ENCODE measurements at regions of chr7 and their contacts with region 1.

Region 1: GRCh38 chr7:44565097-44565794 is 8.5 kb downstream of the DDX56 start:
- DNase-seq: peak; percentile 50 to 67 (median 58)
- H3K4me3 ChIP-seq: no peak overlapping the region
- H3K4me3 Mint-ChIP-seq: peak overlapping the region in 1 of 8 donors; percentile 11
- H3K27ac ChIP-seq: no peak overlapping the region
- H3K27ac Mint-ChIP-seq: peak overlapping the region in 6 of 7 donors; percentile 50 to 87 (median 72)
- H3K4me1 ChIP-seq: peaks cover 10% of the 10 kb centered on the region
- H3K4me1 Mint-ChIP-seq: peaks cover 1 to 11% (median 7%) of the 10 kb centered on the region in 4 donors
- H3K27me3 ChIP-seq: no peaks in the 10 kb centered on the region
- H3K27me3 Mint-ChIP-seq: no peaks in the 10 kb centered on the region

Region 2: GRCh38 chr7:44240983-44241510 is 324.2 kb before region 1 on chr7:
- CTCF ChIA-PET with region 1: interaction called, 31 read pairs
- POLR2A ChIA-PET with region 1: no interaction called
- intact Hi-C with region 1: no loop called
- DNase-seq: peak; percentile 54 to 63 (median 57)
- H3K4me3 ChIP-seq: no peak overlapping the region
- H3K4me3 Mint-ChIP-seq: peak overlapping the region in 7 of 8 donors; percentile 25 to 64 (median 52)
- H3K27ac ChIP-seq: no peak overlapping the region
- H3K27ac Mint-ChIP-seq: peak overlapping the region in 3 of 7 donors; percentile 19 to 59 (median 41)
- H3K4me1 ChIP-seq: no peaks in the 10 kb centered on the region
- H3K4me1 Mint-ChIP-seq: no peaks in the 10 kb centered on the region
- H3K27me3 ChIP-seq: no peaks in the 10 kb centered on the region
- H3K27me3 Mint-ChIP-seq: no peaks in the 10 kb centered on the region

Region 3: DNA sequence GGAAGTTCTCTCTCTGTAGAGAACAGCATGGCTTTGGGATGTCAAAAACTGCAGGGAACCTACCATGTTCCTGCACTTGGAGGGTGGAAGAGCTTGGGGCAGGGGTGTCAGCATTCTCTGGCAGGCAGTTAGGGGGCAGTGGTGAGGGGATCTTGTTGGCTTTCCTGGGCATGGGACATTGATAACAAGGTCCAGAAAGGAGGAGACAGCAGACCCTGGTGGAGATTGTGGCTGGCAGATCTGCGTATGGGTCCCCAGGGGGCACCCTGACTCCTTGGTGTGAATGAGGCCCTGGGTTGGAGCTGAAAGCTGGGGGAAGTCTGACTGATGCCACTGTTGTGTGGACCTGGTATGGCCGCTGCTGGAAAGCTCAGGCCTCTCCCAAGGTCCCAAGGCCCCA is 216.9 kb before region 1 on chr7:
- CTCF ChIA-PET with region 1: interaction called, 5 read pairs
- POLR2A ChIA-PET with region 1: no interaction called
- intact Hi-C with region 1: loop called (anchors 1 kb)
- DNase-seq: no peak
- H3K4me3 ChIP-seq: no peak overlapping the region
- H3K4me3 Mint-ChIP-seq: no peak overlapping the region
- H3K27ac ChIP-seq: no peak overlapping the region
- H3K27ac Mint-ChIP-seq: no peak overlapping the region
- H3K4me1 ChIP-seq: no peaks in the 10 kb centered on the region
- H3K4me1 Mint-ChIP-seq: no peaks in the 10 kb centered on the region
- H3K27me3 ChIP-seq: no peaks in the 10 kb centered on the region
- H3K27me3 Mint-ChIP-seq: peaks cover 5 to 11% of the 10 kb centered on the region in 2 donors

Region 4: GRCh38 chr7:44547536-44548231 is 17.6 kb before region 1 on chr7:
- CTCF ChIA-PET with region 1: interaction called, 17 read pairs
- POLR2A ChIA-PET with region 1: no interaction called
- intact Hi-C with region 1: no loop called
- DNase-seq: no peak
- H3K4me3 ChIP-seq: no peak overlapping the region
- H3K4me3 Mint-ChIP-seq: peak overlapping the region in 3 of 8 donors; percentile 17 to 46 (median 31)
- H3K27ac ChIP-seq: no peak overlapping the region
- H3K27ac Mint-ChIP-seq: peak overlapping the region in 3 of 7 donors; percentile 0 to 61 (median 4)
- H3K4me1 ChIP-seq: no peaks in the 10 kb centered on the region
- H3K4me1 Mint-ChIP-seq: peaks cover 0 to 4% (median 3%) of the 10 kb centered on the region in 4 donors
- H3K27me3 ChIP-seq: no peaks in the 10 kb centered on the region
- H3K27me3 Mint-ChIP-seq: peaks cover 2 to 5% of the 10 kb centered on the region in 2 donors

Region 5: GRCh38 chr7:44581879-44582603 is 16.8 kb after region 1 on chr7 and contains the start of gene TMED4:
- CTCF ChIA-PET with region 1: interaction called, 36 read pairs
- POLR2A ChIA-PET with region 1: interaction called, 67 read pairs
- intact Hi-C with region 1: no loop called
- DNase-seq: peak; percentile 100
- H3K4me3 ChIP-seq: peak within 1 kb of the TSS; percentile 79 to 98
- H3K4me3 Mint-ChIP-seq: peak within 1 kb of the TSS; percentile 90 to 95 (median 92)
- H3K27ac ChIP-seq: peak within 1 kb of the TSS; percentile 89
- H3K27ac Mint-ChIP-seq: peak within 1 kb of the TSS; percentile 97 to 99 (median 98)
- H3K4me1 ChIP-seq: peaks cover 34% of the 10 kb centered on the region
- H3K4me1 Mint-ChIP-seq: peaks cover 18 to 44% (median 32%) of the 10 kb centered on the region in 4 donors
- H3K27me3 ChIP-seq: no peaks in the 10 kb centered on the region
- H3K27me3 Mint-ChIP-seq: no peaks in the 10 kb centered on the region
- total RNA-seq, gene TMED4: 108 to 110 TPM

Region 6: DNA sequence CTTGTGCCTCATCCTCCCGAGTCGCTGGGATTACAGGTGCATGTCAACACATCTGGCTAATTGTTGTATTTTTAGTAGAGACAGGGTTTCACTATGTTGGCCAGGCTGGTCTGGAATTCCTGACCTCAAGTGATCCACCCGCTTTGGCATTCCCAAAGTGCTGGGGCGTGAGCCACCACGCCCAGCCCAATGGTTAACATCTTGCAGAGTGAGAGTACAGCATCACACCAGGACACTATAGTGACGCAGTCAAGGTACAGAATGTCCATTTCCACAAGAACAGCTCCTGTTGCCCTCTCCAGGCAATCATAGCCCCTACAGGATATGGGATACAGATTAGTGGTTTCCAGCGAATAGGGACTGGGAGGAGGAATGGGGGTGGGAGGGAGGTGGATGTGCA is 379.6 kb after region 1 on chr7:
- CTCF ChIA-PET with region 1: no interaction called
- POLR2A ChIA-PET with region 1: no interaction called
- intact Hi-C with region 1: no loop called
- DNase-seq: no peak
- H3K4me3 ChIP-seq: no peak overlapping the region
- H3K4me3 Mint-ChIP-seq: no peak overlapping the region
- H3K27ac ChIP-seq: no peak overlapping the region
- H3K27ac Mint-ChIP-seq: no peak overlapping the region
- H3K4me1 ChIP-seq: no peaks in the 10 kb centered on the region
- H3K4me1 Mint-ChIP-seq: no peaks in the 10 kb centered on the region
- H3K27me3 ChIP-seq: no peaks in the 10 kb centered on the region
- H3K27me3 Mint-ChIP-seq: peaks cover 2 to 3% of the 10 kb centered on the region in 2 donors